Spleen (tissue), 13 donors: ENCODE measurements at regions of chr2 and their contacts with region 1.

Region 1: GRCh38 chr2:108621087-108621559 is 86.9 kb downstream of the LIMS1 start:
- DNase-seq: peak; percentile 91
- H3K4me3 ChIP-seq: peak overlapping the region in 5 of 8 donors; percentile 8 to 58 (median 17)
- H3K27ac ChIP-seq: peak overlapping the region; percentile 71 to 85 (median 74)
- H3K4me1 ChIP-seq: peaks cover 30 to 100% (median 57%) of the 10 kb centered on the region in 6 donors
- H3K27me3 ChIP-seq: no peaks in the 10 kb centered on the region
- CTCF ChIP-seq: no peak
- POLR2A ChIP-seq: no peak

Region 2: DNA sequence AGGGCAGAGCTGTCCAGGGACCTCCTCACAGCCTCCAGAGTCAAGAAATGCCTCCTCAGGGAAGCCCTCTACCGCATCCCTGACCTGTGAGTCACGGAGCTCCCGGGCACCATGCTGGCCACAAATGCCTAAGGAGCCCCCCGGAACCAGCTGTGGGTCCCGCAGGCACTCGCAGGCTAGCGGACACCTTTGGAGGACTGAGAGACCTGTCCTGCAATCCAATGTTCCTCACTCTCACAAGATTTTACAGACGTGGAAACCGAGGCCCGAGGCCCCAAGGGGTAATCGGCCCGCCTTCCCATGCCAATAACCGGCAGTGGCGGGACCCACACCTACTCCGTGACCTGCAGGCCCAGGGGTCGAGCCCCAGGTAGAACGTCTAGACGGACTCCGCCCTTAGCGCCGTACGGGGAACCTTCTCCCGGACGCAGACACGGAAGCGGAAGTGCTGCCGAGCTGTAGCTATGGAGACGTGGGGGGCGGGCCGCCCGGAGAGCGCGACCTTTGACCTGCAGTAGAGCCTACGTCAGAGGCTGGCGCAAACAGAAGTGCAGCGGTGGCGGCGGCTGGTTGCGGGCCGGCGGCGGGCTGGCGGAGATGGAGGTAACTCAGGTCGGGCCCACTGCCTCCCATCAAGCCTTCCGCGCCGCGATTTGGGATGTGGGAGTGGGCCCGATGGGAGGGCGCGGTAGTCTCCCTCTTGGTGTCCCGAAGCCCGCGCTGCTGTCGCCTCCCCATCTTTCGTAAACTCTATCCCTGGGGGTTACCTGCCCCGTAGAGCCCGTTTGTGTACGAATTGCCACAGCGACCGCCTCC is 172.2 kb before region 1 on chr2 and contains the start of gene GCC2:
- intact Hi-C with region 1: loop called (anchors 10 kb)
- DNase-seq: peak; percentile 98
- H3K4me3 ChIP-seq: peak within 1 kb of the TSS; percentile 56 to 92 (median 80)
- H3K27ac ChIP-seq: peak within 1 kb of the TSS; percentile 83 to 96 (median 92)
- H3K4me1 ChIP-seq: peaks cover 10 to 45% (median 29%) of the 10 kb centered on the region in 6 donors
- H3K27me3 ChIP-seq: no peaks in the 10 kb centered on the region
- CTCF ChIP-seq: peak in 2 of 11 experiments; percentile 11 to 25
- POLR2A ChIP-seq: peak; percentile 51 to 83 (median 75)
- total RNA-seq, gene GCC2: 47.0 to 82.6 (median 64.6) TPM